ENCODE measurements at regions of chr14 and their contacts with region 1.

Region 1: GRCh38 chr14:85528080-85528896 is 1.7 kb upstream of the FLRT2 start:
- DNase-seq: peak; percentile 90
- ATAC-seq: peak; percentile 28
- H3K4me3 ChIP-seq: peak overlapping the region; percentile 67
- H3K27ac ChIP-seq: peak overlapping the region; percentile 81; the same call in 1 of the 2 replicates
- H3K4me1 ChIP-seq: no peaks in the 10 kb centered on the region
- H3K27me3 ChIP-seq: no peaks in the 10 kb centered on the region
- CTCF ChIP-seq: peak; percentile 81
- POLR2A ChIP-seq: no peak
- RAD21 ChIP-seq: peak; percentile 95

Region 2: DNA sequence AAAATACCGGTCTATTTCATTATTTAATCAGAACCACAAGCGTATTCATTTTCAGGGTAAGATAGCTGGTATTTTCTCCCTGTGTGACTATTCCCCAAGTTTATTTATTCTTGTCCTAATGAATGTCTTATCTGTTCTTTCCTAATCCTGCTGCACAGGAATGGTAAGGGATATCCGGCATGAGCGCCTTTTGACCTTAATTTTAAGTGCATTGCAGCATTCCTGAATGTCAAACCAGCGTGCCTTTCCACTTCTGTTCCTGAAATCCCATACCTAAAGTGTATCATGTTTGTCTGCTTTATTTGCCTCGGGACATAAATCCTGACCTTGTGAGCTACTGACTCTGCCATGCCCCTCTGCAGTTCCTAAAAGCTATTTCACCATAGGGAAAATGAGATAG is 1711.5 kb before region 1 on chr14:
- CTCF ChIA-PET with region 1: no interaction called
- POLR2A ChIA-PET with region 1: no interaction called
- dilution Hi-C with region 1: no loop called
- in situ Hi-C with region 1: no loop called
- intact Hi-C with region 1: loop called (anchors 5 kb)
- DNase-seq: peak; percentile 74
- ATAC-seq: peak; percentile 90
- H3K4me3 ChIP-seq: no peak overlapping the region
- H3K27ac ChIP-seq: no peak overlapping the region
- H3K4me1 ChIP-seq: peaks cover 1% of the 10 kb centered on the region; the same call in 1 of the 2 replicates
- H3K27me3 ChIP-seq: no peaks in the 10 kb centered on the region
- CTCF ChIP-seq: no peak
- POLR2A ChIP-seq: no peak
- RAD21 ChIP-seq: no peak

Region 3: GRCh38 chr14:84129007-84129406 is 1399.3 kb before region 1 on chr14:
- CTCF ChIA-PET with region 1: interaction called, 3 read pairs
- POLR2A ChIA-PET with region 1: no interaction called
- dilution Hi-C with region 1: no loop called
- in situ Hi-C with region 1: no loop called
- intact Hi-C with region 1: loop called (anchors 5 kb)
- DNase-seq: no peak
- ATAC-seq: no peak
- H3K4me3 ChIP-seq: no peak overlapping the region
- H3K27ac ChIP-seq: no peak overlapping the region
- H3K4me1 ChIP-seq: 0 out of 2 replicates have a peak, but pooled peaks cover 1% of the 10 kb centered on the region
- H3K27me3 ChIP-seq: no peaks in the 10 kb centered on the region
- CTCF ChIP-seq: no peak
- POLR2A ChIP-seq: no peak
- RAD21 ChIP-seq: no peak

Region 4: DNA sequence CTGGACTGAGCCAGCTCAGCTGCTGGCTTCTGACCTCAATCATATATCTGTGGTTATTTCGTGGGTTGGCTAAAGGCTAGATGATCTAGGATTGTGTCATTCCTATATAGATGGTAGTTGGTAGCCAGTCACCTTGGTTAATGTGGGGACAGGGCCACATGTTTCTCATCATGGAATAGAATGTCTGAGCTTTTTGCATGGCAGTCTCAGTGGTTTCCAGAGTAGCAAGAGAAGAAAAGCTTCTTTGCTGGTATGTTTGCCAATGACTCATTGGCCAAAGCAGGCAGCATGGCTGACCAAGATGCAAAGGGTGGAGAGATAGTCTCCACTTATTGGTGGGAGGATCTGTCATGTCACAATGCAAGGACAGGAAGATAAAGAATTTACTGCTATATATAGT is 744.8 kb before region 1 on chr14:
- CTCF ChIA-PET with region 1: no interaction called
- POLR2A ChIA-PET with region 1: no interaction called
- dilution Hi-C with region 1: no loop called
- in situ Hi-C with region 1: no loop called
- intact Hi-C with region 1: loop called (anchors 2 kb)
- DNase-seq: no peak
- ATAC-seq: no peak
- H3K4me3 ChIP-seq: no peak overlapping the region
- H3K27ac ChIP-seq: no peak overlapping the region
- H3K4me1 ChIP-seq: no peaks in the 10 kb centered on the region
- H3K27me3 ChIP-seq: no peaks in the 10 kb centered on the region
- CTCF ChIP-seq: no peak
- POLR2A ChIP-seq: no peak
- RAD21 ChIP-seq: no peak

Region 5: DNA sequence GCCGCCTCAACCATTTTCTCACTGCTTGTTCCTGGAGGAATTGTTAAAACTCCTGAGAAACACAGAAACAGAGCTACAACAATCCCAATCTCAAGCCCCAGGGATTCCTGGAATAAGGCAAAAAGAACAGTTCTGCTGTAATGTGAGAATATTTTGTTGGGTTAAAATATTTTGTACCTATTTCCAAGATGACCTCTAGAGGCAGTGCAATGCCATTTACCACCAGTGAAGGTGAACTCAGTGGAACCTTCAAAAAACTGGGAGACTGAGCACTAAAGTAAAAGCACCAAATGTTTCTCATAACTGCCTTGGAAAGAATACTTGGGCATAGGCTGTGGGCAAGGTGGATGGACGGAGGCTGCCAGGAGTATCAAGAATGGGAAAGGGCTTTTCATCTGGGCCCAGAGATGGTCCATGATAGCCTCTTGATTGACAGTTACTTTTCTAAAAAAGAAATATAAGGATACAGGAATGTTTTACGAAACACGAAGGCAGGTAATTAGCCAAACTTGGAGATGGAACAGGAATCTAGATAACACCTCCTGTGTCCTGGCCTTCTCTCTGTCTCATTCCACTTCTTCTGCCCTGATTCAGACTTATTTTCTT is 332.3 kb before region 1 on chr14:
- CTCF ChIA-PET with region 1: interaction called, 4 read pairs
- POLR2A ChIA-PET with region 1: no interaction called
- dilution Hi-C with region 1: no loop called
- in situ Hi-C with region 1: no loop called
- intact Hi-C with region 1: loop called (anchors 1 kb)
- DNase-seq: peak; percentile 11
- ATAC-seq: peak; percentile 48; the same call in 1 of the 2 replicates
- H3K4me3 ChIP-seq: no peak overlapping the region
- H3K27ac ChIP-seq: no peak overlapping the region
- H3K4me1 ChIP-seq: no peaks in the 10 kb centered on the region
- H3K27me3 ChIP-seq: no peaks in the 10 kb centered on the region
- CTCF ChIP-seq: peak; percentile 55
- POLR2A ChIP-seq: no peak
- RAD21 ChIP-seq: peak; percentile 60

Region 6: GRCh38 chr14:85644211-85644610 is 115.9 kb after region 1 on chr14:
- CTCF ChIA-PET with region 1: no interaction called
- POLR2A ChIA-PET with region 1: no interaction called
- dilution Hi-C with region 1: no loop called
- in situ Hi-C with region 1: no loop called
- intact Hi-C with region 1: no loop called
- DNase-seq: no peak
- ATAC-seq: no peak
- H3K4me3 ChIP-seq: no peak overlapping the region
- H3K27ac ChIP-seq: no peak overlapping the region
- H3K4me1 ChIP-seq: no peaks in the 10 kb centered on the region
- H3K27me3 ChIP-seq: no peaks in the 10 kb centered on the region
- CTCF ChIP-seq: no peak
- POLR2A ChIP-seq: no peak
- RAD21 ChIP-seq: no peak

Region 7: DNA sequence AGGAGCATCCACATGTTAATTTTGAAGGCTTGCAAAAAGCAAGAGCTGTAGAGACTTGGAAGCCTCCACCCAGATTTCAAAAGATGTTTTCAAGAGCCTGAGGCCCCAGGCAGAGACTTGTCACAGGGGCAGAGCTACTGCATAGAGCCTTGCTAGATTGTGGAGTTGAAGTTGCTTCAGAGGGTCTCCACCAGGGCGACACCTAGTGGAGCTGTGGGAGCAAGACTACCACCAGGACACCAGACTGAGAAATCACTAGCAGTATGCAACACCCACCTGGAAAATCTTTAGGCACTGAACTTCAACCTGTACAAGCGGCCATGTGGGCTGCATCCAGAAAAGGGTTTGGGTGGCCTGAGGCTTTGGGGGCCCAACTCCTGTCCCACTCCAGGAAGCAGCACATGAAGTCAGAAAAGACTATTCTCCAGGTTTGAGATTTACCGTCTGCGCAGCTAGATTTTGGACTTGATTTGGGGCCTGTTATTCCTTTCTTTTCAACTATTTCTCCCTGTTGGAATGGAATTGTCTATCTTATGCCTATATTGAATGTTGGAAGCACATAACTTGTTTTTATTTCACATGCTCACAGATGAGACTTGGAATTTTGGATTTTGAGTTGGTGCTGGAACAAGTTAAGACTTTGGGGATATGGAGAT is 510.2 kb after region 1 on chr14:
- CTCF ChIA-PET with region 1: no interaction called
- POLR2A ChIA-PET with region 1: no interaction called
- dilution Hi-C with region 1: no loop called
- in situ Hi-C with region 1: loop called (anchors 25 kb)
- intact Hi-C with region 1: loop called (anchors 5 kb)
- DNase-seq: peak; percentile 62
- ATAC-seq: peak; percentile 89
- H3K4me3 ChIP-seq: no peak overlapping the region
- H3K27ac ChIP-seq: no peak overlapping the region
- H3K4me1 ChIP-seq: no peaks in the 10 kb centered on the region
- H3K27me3 ChIP-seq: no peaks in the 10 kb centered on the region
- CTCF ChIP-seq: peak; percentile 71
- POLR2A ChIP-seq: no peak
- RAD21 ChIP-seq: peak; percentile 68

Measured in IMR-90 (cell line).